Head of caudate nucleus (tissue), 42 donors: ENCODE measurements at regions of chr18 and their contacts with region 1.

Region 1: GRCh38 chr18:13823707-13824395 is at the start of gene MC5R:
- DNase-seq: peak in 41 of 42 donors; percentile 24 to 87 (median 74)

Region 2: DNA sequence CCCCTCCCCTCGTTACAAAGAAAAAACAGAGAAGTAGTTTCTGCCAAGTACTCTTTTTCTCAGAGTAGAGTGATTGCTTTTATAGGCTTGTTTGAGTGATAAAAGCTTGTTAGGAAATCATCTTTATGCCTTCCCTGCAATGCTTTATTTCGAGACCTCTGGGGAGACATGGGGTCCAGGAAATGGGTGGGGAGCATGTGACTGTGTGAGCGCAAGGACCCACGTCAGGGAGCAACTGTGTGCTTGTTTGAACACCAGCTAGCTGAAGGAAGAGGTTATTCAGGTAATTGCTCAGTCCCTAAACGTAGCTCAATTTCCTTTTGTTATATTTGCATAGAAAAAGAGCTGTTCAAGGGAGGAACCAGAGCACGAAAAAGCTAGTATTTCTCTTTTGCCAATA is 284.8 kb before region 1 on chr18:
- intact Hi-C with region 1: no loop called
- DNase-seq: peak in 6 of 42 donors; percentile 7 to 72 (median 22)

Region 3: DNA sequence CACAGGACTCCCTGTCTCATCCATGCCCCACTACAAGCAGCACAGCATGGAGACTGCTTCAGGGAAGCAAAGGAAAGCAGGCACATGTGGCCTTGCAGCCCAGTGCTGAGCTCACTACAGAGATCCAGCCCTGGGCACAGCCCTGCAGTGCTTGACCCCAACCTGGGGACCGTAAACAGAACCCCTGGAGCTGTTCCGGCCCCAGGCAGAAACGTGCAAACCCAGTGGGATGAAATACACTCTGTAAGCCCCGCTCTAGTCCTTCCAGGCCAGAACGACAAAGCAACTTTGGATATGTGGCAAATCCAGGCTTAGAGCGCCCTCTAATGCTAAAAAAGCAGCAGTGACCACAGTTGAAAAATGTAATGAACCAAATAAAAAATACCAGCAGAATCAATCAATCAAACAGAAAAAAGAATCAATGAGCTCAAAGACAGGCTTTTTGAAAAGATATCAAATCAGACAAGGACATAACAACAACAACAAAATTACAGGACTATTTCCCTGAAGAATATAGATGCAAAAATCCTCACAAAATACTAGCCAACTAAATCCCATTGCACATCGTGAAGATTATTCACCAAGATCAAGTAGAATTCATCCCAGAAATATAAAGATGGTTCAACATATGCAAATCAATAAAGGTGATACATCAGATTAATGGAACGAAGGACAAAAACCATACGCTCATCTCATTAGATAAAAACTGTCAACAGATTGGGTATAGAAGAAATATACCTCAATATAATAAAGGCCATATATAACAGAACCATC is 262.8 kb after region 1 on chr18:
- intact Hi-C with region 1: loop called (anchors 5 kb)
- DNase-seq: peak in 29 of 42 donors; percentile 7 to 78 (median 37)